IMR-90 (cell line): ENCODE measurements at regions of chr9 and their contacts with region 1.

Region 1: DNA sequence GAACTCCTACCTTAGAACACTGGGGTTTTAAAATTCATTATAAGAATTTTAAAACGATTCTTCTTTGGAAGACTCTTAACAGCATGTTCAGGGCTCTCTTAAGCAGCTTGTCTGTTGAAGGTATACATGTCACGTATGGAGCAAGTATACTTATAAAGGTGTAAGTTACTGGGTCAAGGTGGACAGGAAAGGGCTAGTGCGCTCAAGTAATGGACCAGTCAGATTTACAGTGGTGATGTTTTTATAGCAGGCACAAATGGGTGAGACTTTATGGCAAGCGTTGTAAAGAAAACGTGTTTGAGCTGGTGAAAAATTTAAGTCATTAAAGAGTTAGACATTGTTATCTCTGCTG is 7.9 kb downstream of the SLC44A1 start:
- DNase-seq: no peak
- ATAC-seq: no peak
- H3K4me3 ChIP-seq: no peak overlapping the region
- H3K27ac ChIP-seq: no peak overlapping the region
- H3K4me1 ChIP-seq: 0 out of 2 replicates have a peak, but pooled peaks cover 1% of the 10 kb centered on the region
- H3K27me3 ChIP-seq: no peaks in the 10 kb centered on the region
- CTCF ChIP-seq: no peak
- POLR2A ChIP-seq: no peak
- RAD21 ChIP-seq: no peak

Region 2: GRCh38 chr9:105392531-105392930 is 140.2 kb after region 1 on chr9:
- CTCF ChIA-PET with region 1: no interaction called
- POLR2A ChIA-PET with region 1: interaction called, 18 read pairs
- dilution Hi-C with region 1: no loop called
- in situ Hi-C with region 1: no loop called
- intact Hi-C with region 1: no loop called
- DNase-seq: no peak
- ATAC-seq: no peak
- H3K4me3 ChIP-seq: no peak overlapping the region
- H3K27ac ChIP-seq: no peak overlapping the region
- H3K4me1 ChIP-seq: peaks cover 3% of the 10 kb centered on the region
- H3K27me3 ChIP-seq: no peaks in the 10 kb centered on the region
- CTCF ChIP-seq: no peak
- POLR2A ChIP-seq: no peak
- RAD21 ChIP-seq: no peak